ENCODE measurements at regions of chr2 and their contacts with region 1.

Region 1: GRCh38 chr2:28626891-28627421 is 124.7 kb upstream of the PPP1CB start:
- DNase-seq: no peak
- H3K4me3 Mint-ChIP-seq: no peak overlapping the region
- H3K27ac Mint-ChIP-seq: peak overlapping the region; percentile 66
- H3K4me1 Mint-ChIP-seq: peaks cover 61% of the 10 kb centered on the region
- H3K27me3 Mint-ChIP-seq: no peaks in the 10 kb centered on the region

Region 2: DNA sequence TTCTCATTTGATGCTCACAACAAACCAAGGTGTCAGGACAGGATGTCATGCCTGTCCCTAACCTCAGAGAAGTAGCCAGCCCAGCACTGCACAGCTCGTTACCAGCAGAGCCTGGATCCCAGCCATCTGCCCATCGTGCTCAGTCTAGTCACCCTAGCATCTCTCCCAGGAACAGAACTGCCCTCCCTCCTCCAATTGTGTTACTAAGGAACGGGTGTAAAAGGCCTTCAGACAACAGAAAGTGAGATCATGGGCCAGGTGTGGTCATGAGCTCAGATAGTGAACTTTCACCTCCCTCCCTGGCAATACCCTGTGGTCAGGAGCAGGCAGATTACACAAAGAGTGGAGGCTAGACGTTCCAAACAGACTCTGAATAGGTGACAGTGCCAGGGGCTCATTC is 12.9 kb after region 1 on chr2:
- CTCF ChIA-PET with region 1: interaction called, 11 read pairs
- POLR2A ChIA-PET with region 1: no interaction called
- DNase-seq: no peak
- H3K4me3 Mint-ChIP-seq: no peak overlapping the region
- H3K27ac Mint-ChIP-seq: no peak overlapping the region
- H3K4me1 Mint-ChIP-seq: no peaks in the 10 kb centered on the region
- H3K27me3 Mint-ChIP-seq: no peaks in the 10 kb centered on the region

Region 3: GRCh38 chr2:28654978-28655320 is 28.0 kb after region 1 on chr2:
- CTCF ChIA-PET with region 1: no interaction called
- POLR2A ChIA-PET with region 1: no interaction called
- DNase-seq: no peak
- H3K4me3 Mint-ChIP-seq: no peak overlapping the region
- H3K27ac Mint-ChIP-seq: no peak overlapping the region
- H3K4me1 Mint-ChIP-seq: peaks cover 24% of the 10 kb centered on the region
- H3K27me3 Mint-ChIP-seq: peaks cover 3% of the 10 kb centered on the region

Measured in activated CD4-positive, alpha-beta T cell treated with anti-CD3 and anti-CD28 coated beads, Interleukin-2, amount 10 ng/mL, durations not matched to agents 7 days and 5 days (primary cell).